Left cardiac atrium (tissue), 4 donors: ENCODE measurements at regions of chr17 and their contacts with region 1.

Region 1: DNA sequence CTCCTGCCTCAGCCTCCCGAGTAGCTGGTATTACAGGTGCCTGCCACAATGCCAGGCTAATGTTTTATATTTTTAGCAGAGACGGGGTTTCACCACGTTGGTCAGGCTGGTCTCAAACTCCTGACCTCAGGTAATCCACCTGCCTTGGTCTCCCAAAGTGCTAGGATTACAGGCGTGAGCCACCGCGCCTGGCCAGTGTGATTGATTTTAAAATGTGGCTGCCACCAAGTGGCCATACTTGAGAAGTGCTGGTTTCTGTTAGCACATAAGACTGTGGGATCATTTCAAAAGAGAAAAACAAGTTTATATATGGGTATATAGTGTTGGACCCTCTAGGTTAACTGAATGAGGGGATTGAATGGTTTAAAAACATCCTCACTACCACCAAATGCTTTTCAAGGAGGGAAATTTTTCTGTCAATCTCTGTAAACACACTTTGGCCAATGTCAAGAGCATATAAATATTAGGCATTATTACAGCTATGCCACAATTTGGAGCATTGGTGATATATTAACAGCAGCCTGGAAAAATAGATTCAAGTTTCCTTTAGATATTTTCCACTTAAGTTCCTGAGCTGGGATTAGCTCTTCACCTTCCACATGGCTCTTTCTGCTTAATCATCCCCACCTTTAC is 13.5 kb upstream of the DHRS13 start:
- DNase-seq: no peak
- ATAC-seq: peak; percentile 63 to 71

Region 2: GRCh38 chr17:28763804-28764266 is 152.6 kb before region 1 on chr17:
- intact Hi-C with region 1: loop called in 1 of 2 experiments (anchors 5 kb)
- DNase-seq: peak; percentile 78
- ATAC-seq: peak in 1 of 2 donors; percentile 37